ENCODE measurements at regions of chr3 and their contacts with region 1.

Region 1: DNA sequence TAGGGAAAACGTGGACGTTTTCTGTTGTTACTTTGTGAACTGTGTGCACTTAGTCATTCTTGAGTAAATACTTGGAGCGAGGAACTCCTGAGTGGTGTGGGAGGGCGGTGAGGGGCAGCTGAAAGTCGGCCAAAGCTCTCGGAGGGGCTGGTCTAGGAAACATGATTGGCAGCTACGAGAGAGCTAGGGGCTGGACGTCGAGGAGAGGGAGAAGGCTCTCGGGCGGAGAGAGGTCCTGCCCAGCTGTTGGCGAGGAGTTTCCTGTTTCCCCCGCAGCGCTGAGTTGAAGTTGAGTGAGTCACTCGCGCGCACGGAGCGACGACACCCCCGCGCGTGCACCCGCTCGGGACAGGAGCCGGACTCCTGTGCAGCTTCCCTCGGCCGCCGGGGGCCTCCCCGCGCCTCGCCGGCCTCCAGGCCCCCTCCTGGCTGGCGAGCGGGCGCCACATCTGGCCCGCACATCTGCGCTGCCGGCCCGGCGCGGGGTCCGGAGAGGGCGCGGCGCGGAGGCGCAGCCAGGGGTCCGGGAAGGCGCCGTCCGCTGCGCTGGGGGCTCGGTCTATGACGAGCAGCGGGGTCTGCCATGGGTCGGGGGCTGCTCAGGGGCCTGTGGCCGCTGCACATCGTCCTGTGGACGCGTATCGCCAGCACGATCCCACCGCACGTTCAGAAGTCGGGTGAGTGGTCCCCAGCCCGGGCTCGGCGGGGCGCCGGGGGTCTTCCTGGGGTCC is at the start of gene TGFBR2:
- DNase-seq: peak; percentile 94 to 96
- ATAC-seq: peak; percentile 95 to 98 (median 96)
- H3K4me3 ChIP-seq: peak within 1 kb of the TSS; percentile 66 to 98 (median 92)
- H3K27ac ChIP-seq: peak within 1 kb of the TSS; percentile 96 to 100 (median 99)
- H3K4me1 ChIP-seq: peaks cover 2 to 76% (median 45%) of the 10 kb centered on the region in 9 donors
- H3K27me3 ChIP-seq: no peaks in the 10 kb centered on the region
- CTCF ChIP-seq: peak in 6 of 9 donors; percentile 13 to 41 (median 32)
- total RNA-seq, gene TGFBR2: 71.1 to 197 (median 92.1) TPM

Region 2: DNA sequence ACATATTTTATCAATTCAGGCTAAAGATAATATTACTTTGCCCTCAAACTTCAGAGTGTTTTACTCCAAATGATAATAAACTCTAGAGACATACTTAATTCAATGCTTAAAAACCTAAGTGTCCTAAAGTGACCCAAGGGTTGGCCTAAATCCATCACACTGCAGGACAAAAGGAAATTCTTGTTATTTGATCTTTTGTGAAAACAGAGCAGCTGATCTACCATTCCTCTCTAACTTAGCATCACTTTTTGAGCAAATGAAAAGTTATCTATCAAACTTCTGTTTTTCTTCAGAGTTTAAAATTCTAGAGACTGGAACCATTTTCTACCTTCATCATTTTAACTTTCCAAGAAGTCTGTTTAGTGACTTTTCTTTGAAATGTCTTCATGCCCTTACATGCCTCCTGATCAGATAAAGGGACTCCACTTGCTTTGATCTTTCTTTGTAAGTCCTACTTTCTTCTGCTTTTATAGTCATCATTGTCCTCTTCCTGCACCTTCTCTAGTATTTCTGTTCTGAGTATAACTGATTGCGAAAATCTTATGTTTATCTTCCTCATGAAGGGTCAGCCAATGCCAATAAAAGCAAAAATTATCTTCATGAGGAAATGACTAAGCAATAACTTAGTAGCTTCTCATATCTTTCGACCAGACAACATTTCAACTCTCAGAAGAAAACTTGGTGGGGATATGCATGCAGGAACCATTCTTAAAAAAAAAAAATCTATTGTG is 378.7 kb before region 1 on chr3:
- intact Hi-C with region 1: loop called in 2 of 10 experiments (anchors 5 kb)
- DNase-seq: peak in 1 of 2 donors; percentile 12
- ATAC-seq: peak; percentile 19 to 79 (median 64)
- H3K4me3 ChIP-seq: no peak overlapping the region
- H3K27ac ChIP-seq: peak overlapping the region in 9 of 10 donors; percentile 5 to 68 (median 51)
- H3K4me1 ChIP-seq: peaks cover 6 to 60% (median 44%) of the 10 kb centered on the region in 9 donors
- H3K27me3 ChIP-seq: no peaks in the 10 kb centered on the region
- CTCF ChIP-seq: no peak

Region 3: GRCh38 chr3:30347679-30348216 is 258.7 kb before region 1 on chr3:
- intact Hi-C with region 1: loop called in 2 of 10 experiments (anchors 5 to 10 kb)
- DNase-seq: no peak
- ATAC-seq: no peak
- H3K4me3 ChIP-seq: no peak overlapping the region
- H3K27ac ChIP-seq: peak overlapping the region in 3 of 10 donors; percentile 39 to 66 (median 65)
- H3K4me1 ChIP-seq: peaks cover 3 to 85% (median 51%) of the 10 kb centered on the region in 9 donors
- H3K27me3 ChIP-seq: no peaks in the 10 kb centered on the region
- CTCF ChIP-seq: no peak

Region 4: DNA sequence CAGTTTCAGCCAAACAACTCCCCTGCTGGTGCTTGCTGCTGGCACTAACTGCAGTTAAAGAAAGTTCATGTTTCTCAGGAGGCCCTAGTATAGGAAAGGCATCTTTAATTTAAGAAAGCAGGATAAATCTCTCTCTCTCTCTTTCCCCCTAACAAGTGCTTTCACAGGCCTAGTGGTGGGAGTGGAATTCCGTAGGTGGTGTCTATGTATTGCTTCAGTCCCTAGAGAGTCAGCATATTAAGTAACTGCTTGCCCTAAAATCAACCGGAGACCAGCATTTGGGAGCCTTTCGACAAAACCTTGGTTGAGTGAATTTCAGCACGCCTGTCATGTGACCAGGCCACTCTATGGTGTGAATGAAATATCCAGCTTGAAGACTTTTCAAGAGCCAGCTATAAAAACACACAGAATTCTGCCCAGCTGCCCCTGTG is 169.3 kb before region 1 on chr3:
- intact Hi-C with region 1: loop called in 2 of 10 experiments (anchors 5 to 10 kb)
- DNase-seq: peak in 1 of 2 donors; percentile 32
- ATAC-seq: peak; percentile 53 to 81 (median 70)
- H3K4me3 ChIP-seq: no peak overlapping the region
- H3K27ac ChIP-seq: peak overlapping the region in 9 of 10 donors; percentile 12 to 70 (median 34)
- H3K4me1 ChIP-seq: peaks cover 0 to 51% (median 38%) of the 10 kb centered on the region in 9 donors
- H3K27me3 ChIP-seq: no peaks in the 10 kb centered on the region
- CTCF ChIP-seq: no peak

Region 5: DNA sequence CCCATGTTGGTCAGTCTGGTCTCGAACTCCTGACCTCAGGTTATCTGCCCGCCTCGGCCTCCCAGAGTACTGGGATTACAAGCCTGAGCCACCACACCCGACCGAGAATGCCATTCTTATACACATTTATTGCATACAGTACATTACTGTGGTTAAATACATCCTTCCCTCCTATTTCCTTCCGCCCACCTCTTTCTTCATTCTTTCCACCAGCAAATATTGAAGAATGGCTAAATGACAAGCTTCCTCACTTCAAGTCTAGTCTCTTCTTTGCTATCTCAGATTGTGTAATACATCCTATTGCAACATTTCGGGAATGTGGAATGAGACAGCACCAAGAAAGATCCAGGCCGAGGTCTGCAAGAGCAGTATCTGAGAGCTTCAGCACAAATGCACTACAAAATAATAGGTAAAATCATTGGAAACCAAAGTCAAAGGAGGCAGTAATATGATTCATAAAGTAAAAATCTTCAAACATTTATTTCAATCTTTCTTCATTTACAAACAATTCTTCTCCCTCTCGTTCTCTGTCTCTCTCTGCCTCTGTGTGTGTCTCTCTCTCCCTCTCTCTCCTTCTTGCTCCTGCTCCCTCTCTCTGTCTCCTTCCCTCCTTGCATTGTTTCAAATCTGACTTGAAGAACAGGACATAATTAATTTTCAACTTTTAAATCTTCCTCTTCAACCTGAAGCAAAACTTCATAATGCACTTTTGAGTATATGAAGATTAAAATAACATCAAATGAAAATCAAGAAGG is 94.8 kb before region 1 on chr3:
- intact Hi-C with region 1: loop called in 2 of 10 experiments (anchors 5 to 10 kb)
- DNase-seq: no peak
- ATAC-seq: peak; percentile 64 to 96 (median 83)
- H3K4me3 ChIP-seq: no peak overlapping the region
- H3K27ac ChIP-seq: peak overlapping the region in 8 of 10 donors; percentile 11 to 51 (median 30)
- H3K4me1 ChIP-seq: peaks cover 0 to 20% (median 0%) of the 10 kb centered on the region in 9 donors
- H3K27me3 ChIP-seq: no peaks in the 10 kb centered on the region
- CTCF ChIP-seq: no peak

Region 6: GRCh38 chr3:30623351-30623750 is 16.9 kb after region 1 on chr3:
- intact Hi-C with region 1: loop called in 1 of 10 experiments (anchors 2 kb)
- DNase-seq: no peak
- ATAC-seq: no peak
- H3K4me3 ChIP-seq: no peak overlapping the region
- H3K27ac ChIP-seq: peak overlapping the region in 3 of 10 donors; percentile 12 to 65 (median 61)
- H3K4me1 ChIP-seq: peaks cover 8 to 100% (median 98%) of the 10 kb centered on the region in 9 donors
- H3K27me3 ChIP-seq: no peaks in the 10 kb centered on the region
- CTCF ChIP-seq: no peak

Region 7: DNA sequence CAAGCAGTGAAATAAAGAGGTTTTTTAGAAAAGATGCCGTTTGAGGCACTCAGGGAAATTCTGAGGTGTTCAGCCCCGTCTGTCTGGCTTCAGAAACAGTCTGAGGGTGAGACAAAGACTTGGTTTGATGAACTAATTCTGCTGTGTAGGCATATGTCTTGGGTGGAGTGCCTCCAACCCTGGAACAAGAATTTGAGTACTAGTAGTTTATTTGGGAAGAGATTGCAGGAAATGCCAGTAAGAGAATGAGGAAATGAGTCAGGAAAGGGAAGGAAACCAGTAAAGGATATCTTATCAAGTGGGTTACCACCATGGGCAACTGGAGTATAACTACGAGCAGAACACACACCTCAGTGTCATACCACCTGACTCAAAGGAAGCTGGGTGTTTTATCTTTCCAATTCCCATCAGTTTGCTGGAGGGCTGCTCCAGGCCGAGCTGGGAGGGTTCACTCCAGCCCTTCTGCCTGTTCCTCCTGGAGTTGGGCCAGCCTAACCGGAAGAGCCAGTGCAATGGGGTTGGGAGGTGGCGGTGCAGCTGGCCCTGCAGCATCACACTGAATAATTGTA is 75.3 kb after region 1 on chr3:
- intact Hi-C with region 1: loop called in 4 of 10 experiments (anchors 5 to 10 kb)
- DNase-seq: peak; percentile 57 to 64
- ATAC-seq: peak; percentile 55 to 75 (median 66)
- H3K4me3 ChIP-seq: peak overlapping the region in 1 of 10 donors; percentile 20
- H3K27ac ChIP-seq: peak overlapping the region; percentile 51 to 83 (median 67)
- H3K4me1 ChIP-seq: peaks cover 17 to 97% (median 89%) of the 10 kb centered on the region in 9 donors
- H3K27me3 ChIP-seq: no peaks in the 10 kb centered on the region
- CTCF ChIP-seq: no peak

Region 8: GRCh38 chr3:30795176-30795575 is 188.7 kb after region 1 on chr3:
- intact Hi-C with region 1: no loop called
- DNase-seq: no peak
- ATAC-seq: no peak
- H3K4me3 ChIP-seq: no peak overlapping the region
- H3K27ac ChIP-seq: no peak overlapping the region
- H3K4me1 ChIP-seq: no peaks in the 10 kb centered on the region
- H3K27me3 ChIP-seq: no peaks in the 10 kb centered on the region
- CTCF ChIP-seq: no peak

Region 9: DNA sequence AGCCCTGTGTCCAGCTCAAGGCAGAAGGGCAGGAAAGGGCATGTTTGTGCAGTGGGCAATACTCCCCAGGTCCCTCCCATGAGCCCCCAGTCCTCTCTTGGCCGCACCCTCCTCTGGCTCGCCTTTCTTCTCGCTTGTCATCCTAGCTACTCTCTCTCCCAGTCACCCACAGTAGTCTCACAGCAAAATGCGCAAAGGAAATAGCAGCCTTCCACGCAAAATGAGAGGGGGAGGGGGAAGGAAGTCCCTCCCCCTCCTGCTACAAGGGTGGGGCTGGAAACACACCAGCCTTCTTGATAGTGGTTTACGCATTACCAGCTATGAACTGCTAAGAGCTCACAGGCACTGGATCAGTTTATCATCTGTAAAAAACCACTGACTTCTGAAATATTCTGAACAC is 204.2 kb after region 1 on chr3:
- intact Hi-C with region 1: no loop called
- DNase-seq: peak; percentile 16 to 40
- ATAC-seq: peak; percentile 73 to 91 (median 82)
- H3K4me3 ChIP-seq: peak overlapping the region in 4 of 10 donors; percentile 1 to 35 (median 20)
- H3K27ac ChIP-seq: peak overlapping the region; percentile 9 to 80 (median 66)
- H3K4me1 ChIP-seq: peaks cover 3 to 20% (median 7%) of the 10 kb centered on the region in 9 donors
- H3K27me3 ChIP-seq: no peaks in the 10 kb centered on the region
- CTCF ChIP-seq: no peak

Region 10: GRCh38 chr3:31341130-31341529 is 734.7 kb after region 1 on chr3:
- intact Hi-C with region 1: no loop called
- DNase-seq: no peak
- ATAC-seq: no peak
- H3K4me3 ChIP-seq: no peak overlapping the region
- H3K27ac ChIP-seq: no peak overlapping the region
- H3K4me1 ChIP-seq: no peaks in the 10 kb centered on the region
- H3K27me3 ChIP-seq: no peaks in the 10 kb centered on the region
- CTCF ChIP-seq: peak in 1 of 9 donors; percentile 26

Measured in heart right ventricle (tissue), 16 donors.